MCF 10A (cell line): ENCODE measurements at regions of chr17 and their contacts with region 1.

Region 1: DNA sequence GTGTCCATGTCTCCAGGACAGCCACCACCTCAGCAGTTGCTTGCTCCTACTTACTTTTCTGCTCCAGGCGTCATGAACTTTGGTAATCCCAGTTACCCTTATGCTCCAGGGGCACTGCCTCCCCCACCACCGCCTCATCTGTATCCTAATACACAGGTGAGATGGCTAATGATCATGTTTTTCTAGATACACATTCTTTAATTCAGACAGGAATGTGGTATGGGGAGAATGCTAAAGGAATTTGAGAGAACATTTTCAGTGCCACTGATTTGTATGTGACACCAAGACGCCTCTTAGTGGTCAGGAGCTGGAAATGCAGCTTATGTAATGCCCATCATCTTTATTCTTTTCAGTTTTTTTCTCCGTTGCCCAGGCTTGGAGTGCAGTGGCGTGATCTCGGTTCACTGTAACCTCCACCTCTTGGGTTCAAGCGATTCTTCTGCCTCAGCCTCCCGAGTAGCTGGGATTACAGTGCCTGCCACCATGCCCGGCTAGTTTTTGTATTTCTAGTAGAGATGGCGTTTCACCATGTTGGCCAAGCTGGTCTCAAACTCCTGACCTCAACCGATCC is 8.9 kb upstream of the RAPGEFL1 start:
- DNase-seq: peak; percentile 57
- H3K4me3 Mint-ChIP-seq: no peak overlapping the region
- H3K27ac Mint-ChIP-seq: peak overlapping the region; percentile 47
- H3K4me1 Mint-ChIP-seq: peaks cover 7% of the 10 kb centered on the region
- H3K27me3 Mint-ChIP-seq: no peaks in the 10 kb centered on the region
- CTCF ChIP-seq: peak; percentile 70

Region 2: DNA sequence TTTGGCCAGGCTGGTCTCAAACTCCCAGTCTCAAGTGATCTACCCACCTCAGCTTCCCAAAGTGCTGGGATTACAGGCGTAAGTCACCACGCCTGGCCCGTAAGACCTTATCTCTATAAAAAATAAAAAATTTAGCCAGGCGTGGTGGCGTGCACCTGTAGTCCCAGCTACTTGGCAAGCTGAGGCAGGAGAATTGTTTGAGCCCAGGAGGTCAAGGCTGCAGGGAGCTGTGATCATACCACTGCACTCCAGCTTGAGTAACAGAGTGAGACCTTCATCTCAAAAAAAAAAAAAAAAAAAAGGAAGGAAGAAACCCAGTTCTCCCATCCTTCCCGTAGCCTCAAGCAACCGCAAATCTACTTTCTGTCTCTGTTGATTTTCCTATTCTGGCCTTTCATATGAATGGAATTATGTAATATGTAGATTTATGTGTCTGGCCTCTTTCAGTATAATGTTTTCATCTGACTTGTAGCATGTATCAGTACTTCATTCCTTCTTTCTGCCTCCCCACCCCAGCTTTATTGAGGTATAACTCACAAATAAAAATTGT is 16.9 kb before region 1 on chr17:
- CTCF ChIA-PET with region 1: interaction called, 21 read pairs
- POLR2A ChIA-PET with region 1: interaction called, 6 read pairs
- intact Hi-C with region 1: no loop called
- DNase-seq: no peak
- H3K4me3 Mint-ChIP-seq: no peak overlapping the region
- H3K27ac Mint-ChIP-seq: no peak overlapping the region
- H3K4me1 Mint-ChIP-seq: peaks cover 26% of the 10 kb centered on the region
- H3K27me3 Mint-ChIP-seq: no peaks in the 10 kb centered on the region
- CTCF ChIP-seq: no peak

Region 3: GRCh38 chr17:40157973-40158372 is 10.4 kb before region 1 on chr17:
- CTCF ChIA-PET with region 1: interaction called, 12 read pairs
- POLR2A ChIA-PET with region 1: interaction called, 6 read pairs
- intact Hi-C with region 1: no loop called
- DNase-seq: no peak
- H3K4me3 Mint-ChIP-seq: no peak overlapping the region
- H3K27ac Mint-ChIP-seq: no peak overlapping the region
- H3K4me1 Mint-ChIP-seq: no peaks in the 10 kb centered on the region
- H3K27me3 Mint-ChIP-seq: no peaks in the 10 kb centered on the region
- CTCF ChIP-seq: no peak

Region 4: DNA sequence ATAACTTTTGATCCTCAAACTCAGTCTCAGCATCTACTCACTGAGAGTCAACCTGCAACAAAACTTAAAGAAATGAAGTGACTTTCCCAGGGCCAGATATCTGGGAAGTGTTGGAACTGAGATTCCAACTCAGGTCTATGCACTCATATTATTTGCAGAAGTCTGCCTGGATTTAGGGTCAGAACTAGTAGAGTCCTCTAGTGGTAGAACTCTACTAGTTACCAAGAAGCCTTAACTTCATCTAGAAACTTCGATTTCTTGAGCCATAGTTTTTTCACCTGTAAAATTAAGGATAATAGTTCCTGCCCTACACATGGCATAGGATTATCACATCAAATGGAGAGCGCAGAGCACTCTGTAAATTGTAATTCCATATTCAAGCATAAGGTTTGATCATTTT is 558.6 kb after region 1 on chr17:
- CTCF ChIA-PET with region 1: no interaction called
- POLR2A ChIA-PET with region 1: no interaction called
- intact Hi-C with region 1: no loop called
- DNase-seq: peak; percentile 30
- H3K4me3 Mint-ChIP-seq: no peak overlapping the region
- H3K27ac Mint-ChIP-seq: no peak overlapping the region
- H3K4me1 Mint-ChIP-seq: no peaks in the 10 kb centered on the region
- H3K27me3 Mint-ChIP-seq: peaks cover 22% of the 10 kb centered on the region
- CTCF ChIP-seq: peak; percentile 42